Mammary epithelial cell (primary cell): ENCODE measurements at regions of chr5 and their contacts with region 1.

Region 1: GRCh38 chr5:53425598-53426511 is 54.6 kb upstream of the FST start:
- DNase-seq: no peak
- H3K4me3 ChIP-seq: no peak overlapping the region
- H3K27ac ChIP-seq: peak overlapping the region; percentile 100
- H3K4me1 ChIP-seq: peaks cover 44% of the 10 kb centered on the region
- H3K27me3 ChIP-seq: no peaks in the 10 kb centered on the region
- CTCF ChIP-seq: peak; percentile 12 to 24

Region 2: DNA sequence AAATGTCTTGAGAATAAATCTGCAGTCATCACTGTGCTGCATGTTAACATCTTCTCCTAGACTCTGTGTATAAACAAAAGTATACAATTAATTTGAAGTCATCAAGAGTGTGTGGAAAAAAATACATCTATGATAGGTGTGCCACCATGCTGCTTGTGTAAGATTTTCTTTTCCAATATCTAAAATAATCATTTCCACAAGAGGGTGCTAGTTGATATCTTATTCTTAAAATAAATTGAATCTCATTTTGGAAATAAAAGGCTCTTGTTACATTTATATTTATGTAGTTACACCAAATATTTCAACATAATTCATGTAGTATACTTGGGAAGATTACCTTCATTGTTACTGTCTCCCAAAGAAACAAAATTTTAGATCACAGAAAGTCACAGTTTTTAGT is 302.2 kb before region 1 on chr5:
- CTCF ChIA-PET with region 1: no interaction called
- dilution Hi-C with region 1: no loop called
- in situ Hi-C with region 1: no loop called
- intact Hi-C with region 1: loop called (anchors 5 kb)
- DNase-seq: no peak
- H3K4me3 ChIP-seq: no peak overlapping the region
- H3K27ac ChIP-seq: no peak overlapping the region
- H3K4me1 ChIP-seq: peaks cover 12% of the 10 kb centered on the region
- H3K27me3 ChIP-seq: no peaks in the 10 kb centered on the region
- CTCF ChIP-seq: peak in 1 of 2 donors; percentile 20

Region 3: GRCh38 chr5:53262348-53262970 is 163.4 kb before region 1 on chr5:
- CTCF ChIA-PET with region 1: no interaction called
- dilution Hi-C with region 1: no loop called
- in situ Hi-C with region 1: loop called in 1 of 2 experiments (anchors 5 kb)
- intact Hi-C with region 1: loop called (anchors 1 kb)
- DNase-seq: peak; percentile 60
- H3K4me3 ChIP-seq: no peak overlapping the region
- H3K27ac ChIP-seq: peak overlapping the region; percentile 48
- H3K4me1 ChIP-seq: peaks cover 44% of the 10 kb centered on the region
- H3K27me3 ChIP-seq: no peaks in the 10 kb centered on the region
- CTCF ChIP-seq: peak; percentile 63 to 68

Region 4: DNA sequence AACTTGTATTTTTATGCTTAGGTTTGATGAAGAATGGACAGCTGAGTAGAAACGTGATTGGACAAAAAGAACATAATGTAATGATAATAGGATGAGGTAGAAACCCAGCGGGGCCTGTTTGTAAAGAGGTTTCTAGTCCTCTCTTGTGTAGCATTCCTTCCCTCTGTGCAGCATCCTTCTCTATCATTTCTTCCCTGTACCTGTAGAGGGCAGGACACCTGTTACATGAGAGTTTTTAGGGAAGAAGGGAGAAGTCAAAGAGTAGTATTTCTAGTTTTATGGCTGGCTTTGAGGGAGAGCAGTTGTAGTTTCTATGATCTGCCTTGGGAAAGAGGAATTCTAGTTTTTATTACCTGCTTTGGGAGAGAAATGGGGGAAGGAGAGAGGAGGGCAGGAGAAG is 107.6 kb before region 1 on chr5:
- CTCF ChIA-PET with region 1: no interaction called
- dilution Hi-C with region 1: no loop called
- in situ Hi-C with region 1: loop called in 1 of 2 experiments (anchors 5 kb)
- intact Hi-C with region 1: no loop called
- DNase-seq: peak; percentile 49
- H3K4me3 ChIP-seq: no peak overlapping the region
- H3K27ac ChIP-seq: peak overlapping the region; percentile 99
- H3K4me1 ChIP-seq: peaks cover 50% of the 10 kb centered on the region
- H3K27me3 ChIP-seq: no peaks in the 10 kb centered on the region
- CTCF ChIP-seq: peak; percentile 35 to 61

Region 5: DNA sequence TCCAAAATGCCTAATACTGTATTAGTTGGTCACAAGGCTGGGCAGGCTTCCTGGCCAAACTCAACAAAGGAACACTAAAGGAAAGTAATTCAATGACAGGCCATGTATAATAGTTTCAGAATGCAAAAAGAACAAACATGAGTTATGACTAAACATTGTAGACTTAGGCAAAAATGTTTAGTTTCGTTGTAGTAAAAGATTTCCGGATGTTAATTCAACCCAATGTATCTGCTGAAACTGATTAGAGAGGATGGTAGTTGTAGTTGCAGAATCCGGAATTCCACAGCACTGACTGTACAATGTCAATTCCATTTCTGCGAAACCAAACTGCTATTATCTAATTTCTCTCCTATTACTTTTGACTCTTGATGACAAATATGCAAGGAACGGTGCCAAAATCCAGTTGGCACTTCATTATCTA is 63.3 kb before region 1 on chr5:
- CTCF ChIA-PET with region 1: no interaction called
- dilution Hi-C with region 1: loop called (anchors 10 kb)
- in situ Hi-C with region 1: no loop called
- intact Hi-C with region 1: loop called (anchors 1 kb)
- DNase-seq: peak; percentile 99
- H3K4me3 ChIP-seq: no peak overlapping the region
- H3K27ac ChIP-seq: peak overlapping the region; percentile 100
- H3K4me1 ChIP-seq: peaks cover 56% of the 10 kb centered on the region
- H3K27me3 ChIP-seq: no peaks in the 10 kb centered on the region
- CTCF ChIP-seq: no peak

Region 6: GRCh38 chr5:54217826-54218503 is 792.1 kb after region 1 on chr5:
- CTCF ChIA-PET with region 1: no interaction called
- dilution Hi-C with region 1: no loop called
- in situ Hi-C with region 1: no loop called
- intact Hi-C with region 1: loop called (anchors 1 kb)
- DNase-seq: peak; percentile 42
- H3K4me3 ChIP-seq: no peak overlapping the region
- H3K27ac ChIP-seq: no peak overlapping the region
- H3K4me1 ChIP-seq: no peaks in the 10 kb centered on the region
- H3K27me3 ChIP-seq: no peaks in the 10 kb centered on the region
- CTCF ChIP-seq: peak; percentile 82 to 83